OCI-LY7 (cell line): ENCODE measurements at regions of chr14 and their contacts with region 1.

Region 1: GRCh38 chr14:53432378-53432802 is 279.3 kb upstream of the DDHD1 start:
- DNase-seq: peak; percentile 41
- H3K4me3 ChIP-seq: no peak overlapping the region
- H3K27ac ChIP-seq: no peak overlapping the region
- H3K4me1 ChIP-seq: no peaks in the 10 kb centered on the region
- CTCF ChIP-seq: peak; percentile 87

Region 2: DNA sequence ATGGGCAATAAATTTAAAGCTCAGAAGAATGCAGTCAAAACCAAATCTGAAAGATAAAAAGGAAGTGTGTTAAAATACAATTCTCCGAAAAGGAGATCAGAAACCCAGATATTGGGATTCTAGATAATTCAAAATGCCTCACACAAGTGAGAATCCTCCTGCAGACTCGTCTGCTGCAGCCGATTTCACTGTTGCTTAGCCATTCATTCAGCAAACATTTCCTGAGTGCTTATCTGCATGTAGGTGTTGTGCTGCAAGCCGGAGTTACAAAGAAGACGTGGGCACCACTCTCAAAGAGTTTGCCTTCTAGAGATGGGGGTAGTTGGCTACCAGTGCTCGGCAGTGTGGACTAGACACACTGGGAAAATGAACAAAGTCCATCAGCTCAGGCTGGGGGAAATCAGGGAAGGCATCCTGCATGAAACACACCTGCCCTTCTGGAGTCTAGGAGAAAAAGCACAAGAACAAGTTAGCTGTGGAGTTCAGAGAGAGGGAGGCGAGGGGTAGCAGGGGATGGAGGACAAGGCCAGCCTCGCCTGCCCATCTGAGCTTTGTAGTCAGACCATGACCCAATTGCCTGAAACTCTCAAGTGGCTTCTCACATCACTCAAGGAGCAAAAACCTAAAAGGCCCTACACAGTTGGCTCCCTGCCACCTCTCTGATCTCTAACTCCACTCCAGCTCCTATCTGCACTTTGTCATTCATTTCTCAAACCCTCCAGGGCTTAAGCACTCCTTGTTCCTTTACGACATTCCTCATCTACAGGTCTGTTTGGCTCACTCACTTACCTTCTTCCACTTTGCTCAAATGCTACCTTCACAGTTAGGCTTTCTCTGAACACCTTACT is 30.8 kb after region 1 on chr14:
- CTCF ChIA-PET with region 1: no interaction called
- POLR2A ChIA-PET with region 1: no interaction called
- intact Hi-C with region 1: no loop called
- DNase-seq: no peak
- H3K4me3 ChIP-seq: no peak overlapping the region
- H3K27ac ChIP-seq: no peak overlapping the region
- H3K4me1 ChIP-seq: no peaks in the 10 kb centered on the region
- CTCF ChIP-seq: no peak

Region 3: DNA sequence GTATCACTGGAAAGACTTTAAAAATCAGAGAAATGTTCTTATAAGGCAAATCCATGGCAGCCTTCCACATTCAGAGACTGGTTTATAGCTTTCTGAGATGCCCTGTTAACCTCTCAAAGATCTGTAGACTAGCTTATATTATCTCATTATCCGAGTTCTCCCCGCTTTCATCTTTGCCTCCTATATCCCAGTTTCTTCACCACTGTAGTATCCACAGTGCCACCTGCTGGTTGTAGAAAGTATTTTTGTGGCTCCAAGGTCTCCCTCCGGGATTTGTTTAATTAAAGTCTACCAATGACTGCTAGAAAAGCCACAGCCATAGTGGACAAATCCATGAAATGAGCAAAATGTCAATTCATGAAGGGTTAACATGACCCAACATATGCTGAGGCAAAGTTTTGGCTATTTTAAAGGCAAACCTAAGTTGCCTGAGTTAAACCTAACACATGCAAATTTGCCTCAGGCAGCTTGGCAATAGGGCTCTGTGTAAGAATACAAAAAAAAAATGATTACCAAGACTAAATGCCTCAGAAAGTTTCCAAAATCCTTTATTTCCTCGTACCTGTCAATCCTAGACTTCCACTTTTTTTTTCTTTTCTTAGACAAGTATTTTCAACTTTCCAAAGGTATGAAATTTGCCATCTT is 743.0 kb after region 1 on chr14:
- CTCF ChIA-PET with region 1: no interaction called
- POLR2A ChIA-PET with region 1: no interaction called
- intact Hi-C with region 1: loop called (anchors 2 kb)
- DNase-seq: peak; percentile 65
- H3K4me3 ChIP-seq: no peak overlapping the region
- H3K27ac ChIP-seq: no peak overlapping the region
- H3K4me1 ChIP-seq: no peaks in the 10 kb centered on the region
- CTCF ChIP-seq: peak; percentile 95

Region 4: DNA sequence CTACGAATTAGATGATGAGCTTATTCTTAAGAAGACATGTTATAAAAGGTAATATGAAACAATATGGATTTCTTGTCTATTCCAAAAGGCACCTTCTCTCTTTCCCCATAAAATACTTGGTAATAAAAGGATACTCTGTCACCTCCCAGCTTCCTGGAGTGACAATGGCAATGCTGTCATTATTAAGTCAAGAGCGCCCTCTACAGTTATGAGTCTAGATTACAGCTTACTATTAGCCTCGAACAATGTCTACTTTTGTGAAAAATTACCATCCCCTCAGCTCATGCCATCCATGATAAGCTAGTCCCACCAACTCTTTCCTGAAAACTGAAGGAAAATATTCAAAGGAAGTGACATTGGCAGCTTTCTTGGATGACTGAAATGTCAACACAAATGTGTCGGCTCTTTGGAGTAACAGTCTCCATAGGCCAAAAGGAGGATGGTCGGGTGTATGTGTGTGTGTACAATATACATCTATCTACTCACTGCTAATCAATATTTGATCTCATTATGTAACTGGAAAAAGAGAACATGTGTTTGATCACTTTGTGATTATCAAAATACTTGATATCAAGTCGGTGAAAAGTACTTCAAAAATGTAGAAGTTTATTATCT is 915.7 kb after region 1 on chr14:
- CTCF ChIA-PET with region 1: no interaction called
- POLR2A ChIA-PET with region 1: no interaction called
- intact Hi-C with region 1: loop called (anchors 1 kb)
- DNase-seq: peak; percentile 71
- H3K4me3 ChIP-seq: no peak overlapping the region
- H3K27ac ChIP-seq: no peak overlapping the region
- H3K4me1 ChIP-seq: no peaks in the 10 kb centered on the region
- CTCF ChIP-seq: peak; percentile 94